ENCODE measurements at regions of chr2 and their contacts with region 1.

Region 1: DNA sequence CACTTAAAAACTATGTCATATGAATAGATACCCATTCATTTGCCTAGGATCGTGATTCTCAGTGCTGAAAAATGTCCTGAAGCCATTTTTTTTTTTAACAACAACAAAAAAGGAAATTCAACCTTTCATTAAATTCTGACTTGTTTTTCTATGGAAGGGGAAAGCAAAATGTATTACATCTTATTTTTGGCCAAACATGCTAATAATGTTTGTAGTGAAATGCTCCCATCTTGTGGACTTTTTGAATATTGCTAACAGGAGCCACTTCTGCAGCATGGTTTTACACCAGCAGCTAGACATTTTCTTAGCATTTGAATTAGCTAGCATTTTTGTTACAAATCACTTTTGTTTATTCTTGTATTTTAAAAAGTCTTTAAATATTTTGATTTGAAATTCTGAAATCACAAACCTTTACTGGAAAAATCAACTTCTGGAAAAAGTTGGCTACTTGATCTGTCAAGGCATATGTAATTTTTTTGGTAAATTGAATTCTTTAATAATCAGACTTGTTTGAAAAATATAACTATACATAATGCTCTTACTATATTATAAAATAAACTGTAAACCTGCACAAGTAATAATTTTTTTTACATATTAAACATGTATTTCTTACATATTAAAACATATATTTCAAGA is 75.8 kb downstream of the KIDINS220 start:
- DNase-seq: peak; percentile 49 to 56
- ATAC-seq: peak in 1 of 2 experiments; percentile 74; a peak in 2 of 6 replicates
- H3K4me3 ChIP-seq: no peak overlapping the region
- H3K27ac ChIP-seq: no peak overlapping the region
- H3K4me1 ChIP-seq: no peaks in the 10 kb centered on the region
- CTCF ChIP-seq: peak; percentile 86
- EP300 ChIP-seq: no peak
- POLR2A ChIP-seq: no peak
- RAD21 ChIP-seq: peak; percentile 84 to 87

Region 2: GRCh38 chr2:8049176-8049575 is 712.5 kb before region 1 on chr2:
- CTCF ChIA-PET with region 1: no interaction called
- POLR2A ChIA-PET with region 1: no interaction called
- DNase-seq: no peak
- ATAC-seq: no peak
- H3K4me3 ChIP-seq: no peak overlapping the region
- H3K27ac ChIP-seq: no peak overlapping the region
- H3K4me1 ChIP-seq: no peaks in the 10 kb centered on the region
- CTCF ChIP-seq: no peak
- EP300 ChIP-seq: no peak
- POLR2A ChIP-seq: no peak
- RAD21 ChIP-seq: no peak

Region 3: GRCh38 chr2:8693155-8693821 is 68.4 kb before region 1 on chr2:
- CTCF ChIA-PET with region 1: interaction called, 17 read pairs
- POLR2A ChIA-PET with region 1: no interaction called
- DNase-seq: peak; percentile 55 to 65
- ATAC-seq: peak; percentile 95 to 96
- H3K4me3 ChIP-seq: peak overlapping the region; percentile 43
- H3K27ac ChIP-seq: peak overlapping the region; percentile 60 to 86
- H3K4me1 ChIP-seq: peaks cover 10% of the 10 kb centered on the region; the same call in 1 of the 3 replicates
- CTCF ChIP-seq: peak; percentile 93
- EP300 ChIP-seq: no peak
- POLR2A ChIP-seq: no peak
- RAD21 ChIP-seq: peak; percentile 64 to 68

Measured in A549 (cell line).